Panc1 (cell line): ENCODE measurements at regions of chr3 and their contacts with region 1.

Region 1: GRCh38 chr3:51974963-51975851 is at the start of gene ABHD14A:
- DNase-seq: no peak
- ATAC-seq: peak; percentile 73
- H3K4me3 ChIP-seq: peak within 1 kb of the TSS; percentile 76 to 79
- H3K27ac ChIP-seq: peak within 1 kb of the TSS; percentile 91
- H3K4me1 ChIP-seq: peaks cover 19% of the 10 kb centered on the region
- H3K27me3 ChIP-seq: no peaks in the 10 kb centered on the region
- CTCF ChIP-seq: no peak
- total RNA-seq, gene ABHD14A: 11.3 TPM

Region 2: DNA sequence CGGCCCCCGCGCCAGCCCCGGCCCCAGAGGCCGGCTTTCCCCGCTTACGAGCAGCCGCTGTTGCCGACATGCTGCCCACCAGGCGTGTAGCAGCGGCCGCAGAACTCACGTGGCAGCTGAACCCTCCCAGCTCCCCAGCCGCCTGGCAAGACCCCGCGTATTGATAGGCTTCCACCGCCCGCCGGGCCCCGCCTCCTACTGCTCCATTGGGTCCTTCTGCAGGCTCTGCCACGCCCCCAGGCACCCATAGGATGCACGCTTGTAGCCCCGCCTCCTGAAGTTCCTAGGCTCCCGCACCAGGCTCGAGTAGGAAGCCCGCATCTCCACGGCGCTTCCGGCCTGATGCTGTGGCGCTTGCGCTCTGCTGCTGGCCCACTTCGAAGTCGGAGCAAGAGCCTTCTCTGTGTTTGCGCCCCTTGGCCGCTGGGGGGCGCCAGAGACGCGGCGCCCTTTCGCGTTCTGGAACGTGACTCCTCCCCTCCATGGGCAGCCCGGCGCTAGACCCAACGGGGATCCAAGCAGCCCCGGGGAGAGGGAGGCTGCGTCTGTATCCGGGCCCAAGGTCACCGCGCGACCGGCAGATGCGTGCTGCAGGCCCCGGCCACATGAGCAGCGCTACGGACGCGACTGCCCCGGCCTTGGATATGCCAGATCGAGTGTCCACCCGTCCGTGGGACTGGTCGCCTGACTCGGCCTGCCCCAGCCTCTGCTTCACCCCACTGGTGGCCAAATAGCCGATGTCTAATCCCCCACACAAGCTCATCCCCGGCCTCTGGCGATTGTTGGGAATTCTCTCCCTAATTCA is 33.2 kb before region 1 on chr3 and contains the starts of genes PARP3 and RRP9:
- CTCF ChIA-PET with region 1: interaction called, 8 read pairs
- POLR2A ChIA-PET with region 1: no interaction called
- in situ Hi-C with region 1: no loop called
- intact Hi-C with region 1: loop called (anchors 2 kb)
- DNase-seq: peak; percentile 93
- ATAC-seq: peak; percentile 94
- H3K4me3 ChIP-seq: peak within 1 kb of the TSS; percentile 93 to 94
- H3K27ac ChIP-seq: peak within 1 kb of the TSS; percentile 95
- H3K4me1 ChIP-seq: peaks cover 7% of the 10 kb centered on the region; the same call in 1 of the 2 replicates
- H3K27me3 ChIP-seq: no peaks in the 10 kb centered on the region
- CTCF ChIP-seq: peak; percentile 98
- total RNA-seq, gene PARP3: 16.1 TPM
- total RNA-seq, gene RRP9: 54.5 TPM